Heart left ventricle (tissue), 16 donors: ENCODE measurements at regions of chr1 and their contacts with region 1.

Region 1: GRCh38 chr1:165073185-165074007 is 283.1 kb downstream of the LMX1A start:
- DNase-seq: no peak
- ATAC-seq: peak in 3 of 4 donors; percentile 63 to 75 (median 70)
- H3K4me3 ChIP-seq: no peak overlapping the region
- H3K27ac ChIP-seq: peak overlapping the region in 1 of 12 donors; percentile 13
- H3K4me1 ChIP-seq: peaks cover 0 to 10% (median 0%) of the 10 kb centered on the region in 12 donors
- H3K27me3 ChIP-seq: no peaks in the 10 kb centered on the region
- CTCF ChIP-seq: peak; percentile 61 to 88 (median 80)
- POLR2A ChIP-seq: no peak

Region 2: GRCh38 chr1:163528710-163529348 is 1544.6 kb before region 1 on chr1:
- intact Hi-C with region 1: loop called in 5 of 10 experiments (anchors 5 to 10 kb)
- DNase-seq: no peak
- ATAC-seq: no peak
- H3K4me3 ChIP-seq: no peak overlapping the region
- H3K27ac ChIP-seq: no peak overlapping the region
- H3K4me1 ChIP-seq: no peaks in the 10 kb centered on the region
- H3K27me3 ChIP-seq: peaks cover 0 to 3% (median 0%) of the 10 kb centered on the region in 9 donors
- CTCF ChIP-seq: peak; percentile 39 to 66 (median 56)
- POLR2A ChIP-seq: no peak

Region 3: DNA sequence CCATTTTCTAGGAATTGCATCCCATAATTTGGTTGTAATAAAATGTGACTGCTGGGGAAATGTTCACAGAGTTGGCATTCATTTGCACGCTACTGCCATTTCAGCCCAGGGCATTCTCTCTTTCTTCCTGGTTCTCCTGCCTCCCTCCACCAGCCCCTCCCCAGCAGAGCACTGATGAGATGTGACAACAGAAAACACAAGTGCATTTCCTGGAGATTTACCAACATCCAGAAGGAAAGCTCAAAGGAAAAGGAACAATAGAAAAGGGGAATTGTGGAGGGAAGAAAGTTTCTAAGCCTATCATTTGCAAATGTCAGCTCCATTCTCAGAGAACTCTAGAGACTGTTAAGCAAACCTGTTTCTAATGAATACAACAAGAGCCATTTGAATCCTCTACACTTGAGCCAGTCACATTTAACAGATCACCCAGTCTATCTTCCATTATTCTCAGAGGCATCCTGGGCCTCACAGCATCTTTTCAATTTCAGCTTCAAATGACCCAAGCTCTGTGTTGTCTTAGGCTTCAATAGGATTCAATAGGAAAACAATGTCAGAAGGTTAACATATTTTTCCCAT is 910.0 kb before region 1 on chr1:
- intact Hi-C with region 1: loop called in 1 of 10 experiments (anchors 2 kb)
- DNase-seq: no peak
- ATAC-seq: no peak
- H3K4me3 ChIP-seq: no peak overlapping the region
- H3K27ac ChIP-seq: no peak overlapping the region
- H3K4me1 ChIP-seq: no peaks in the 10 kb centered on the region
- H3K27me3 ChIP-seq: no peaks in the 10 kb centered on the region
- CTCF ChIP-seq: no peak
- POLR2A ChIP-seq: no peak

Region 4: GRCh38 chr1:164794310-164794709 is 279.1 kb before region 1 on chr1:
- intact Hi-C with region 1: loop called in 5 of 10 experiments (anchors 5 to 10 kb)
- DNase-seq: no peak
- ATAC-seq: peak; percentile 53 to 92 (median 78)
- H3K4me3 ChIP-seq: no peak overlapping the region
- H3K27ac ChIP-seq: peak overlapping the region in 3 of 12 donors; percentile 22 to 81 (median 42)
- H3K4me1 ChIP-seq: peaks cover 0 to 38% (median 4%) of the 10 kb centered on the region in 12 donors
- H3K27me3 ChIP-seq: no peaks in the 10 kb centered on the region
- CTCF ChIP-seq: no peak
- POLR2A ChIP-seq: no peak

Region 5: GRCh38 chr1:164823486-164824279 is 249.7 kb before region 1 on chr1:
- intact Hi-C with region 1: loop called in 3 of 10 experiments (anchors 10 kb)
- DNase-seq: peak in 4 of 5 donors; percentile 40 to 55 (median 49)
- ATAC-seq: peak; percentile 85 to 93 (median 89)
- H3K4me3 ChIP-seq: no peak overlapping the region
- H3K27ac ChIP-seq: peak overlapping the region; percentile 1 to 84 (median 68)
- H3K4me1 ChIP-seq: peaks cover 0 to 30% (median 9%) of the 10 kb centered on the region in 12 donors
- H3K27me3 ChIP-seq: no peaks in the 10 kb centered on the region
- CTCF ChIP-seq: peak in 3 of 12 donors; percentile 12 to 24 (median 23)
- POLR2A ChIP-seq: no peak

Region 6: GRCh38 chr1:164858101-164858632 is 215.2 kb before region 1 on chr1:
- intact Hi-C with region 1: no loop called
- DNase-seq: peak in 4 of 5 donors; percentile 19 to 55 (median 36)
- ATAC-seq: peak; percentile 52 to 70 (median 66)
- H3K4me3 ChIP-seq: no peak overlapping the region
- H3K27ac ChIP-seq: peak overlapping the region in 9 of 12 donors; percentile 1 to 64 (median 48)
- H3K4me1 ChIP-seq: peaks cover 8 to 38% (median 22%) of the 10 kb centered on the region in 12 donors
- H3K27me3 ChIP-seq: no peaks in the 10 kb centered on the region
- CTCF ChIP-seq: no peak
- POLR2A ChIP-seq: no peak

Region 7: DNA sequence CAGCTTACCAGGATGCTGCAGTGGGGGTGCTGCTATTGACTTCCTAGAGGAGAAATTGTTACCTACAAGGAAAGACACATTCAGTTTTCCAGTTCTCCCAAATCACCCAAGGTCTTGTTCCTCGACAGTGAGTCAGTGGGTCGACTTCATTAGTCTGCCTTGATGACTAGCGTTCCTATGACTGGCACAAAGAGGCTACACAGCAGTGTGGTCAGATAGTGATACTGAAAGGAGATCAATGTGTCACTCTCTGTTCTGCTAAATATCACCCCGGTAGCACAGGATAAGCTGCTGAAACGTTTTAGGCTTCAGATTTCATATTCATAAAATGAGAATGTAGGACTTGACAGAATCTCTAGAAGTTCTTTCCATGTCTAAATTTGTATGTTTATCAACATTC is 74.2 kb before region 1 on chr1:
- intact Hi-C with region 1: no loop called
- DNase-seq: no peak
- ATAC-seq: no peak
- H3K4me3 ChIP-seq: no peak overlapping the region
- H3K27ac ChIP-seq: no peak overlapping the region
- H3K4me1 ChIP-seq: no peaks in the 10 kb centered on the region
- H3K27me3 ChIP-seq: no peaks in the 10 kb centered on the region
- CTCF ChIP-seq: no peak
- POLR2A ChIP-seq: no peak